Activated CD8-positive, alpha-beta T cell treated with anti-CD3 and anti-CD28 coated beads for 36 hours (primary cell): ENCODE measurements at regions of chr12 and their contacts with region 1.

Region 1: DNA sequence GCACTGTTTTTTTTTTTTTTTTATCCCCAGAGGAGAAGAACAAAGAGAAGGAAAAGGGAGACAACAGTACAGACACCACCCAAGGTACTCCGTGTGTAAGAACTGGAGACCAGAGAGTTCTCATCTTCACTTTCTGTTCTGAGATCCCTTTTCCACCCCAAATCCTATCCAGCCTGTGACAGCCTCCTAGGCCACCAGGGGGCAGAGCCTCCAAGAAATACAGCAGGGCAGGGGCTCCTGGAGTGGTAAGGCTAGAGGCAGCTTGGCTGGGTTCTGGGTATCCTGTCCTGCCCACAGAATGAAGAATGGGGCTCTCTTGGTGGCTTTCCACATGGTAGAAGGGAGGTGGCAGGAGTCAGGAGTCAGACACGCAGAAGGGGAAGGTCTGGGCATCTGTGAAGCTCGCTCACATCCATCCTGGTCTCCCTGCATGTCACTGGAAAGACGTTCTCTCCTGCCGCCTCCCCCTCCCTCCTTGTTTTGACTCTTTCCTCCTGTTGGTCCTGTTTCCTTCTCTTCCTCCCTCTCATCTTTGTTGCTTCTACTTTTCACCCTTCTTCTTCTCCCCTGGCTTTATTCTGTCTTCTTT is 12.0 kb downstream of the CLSTN3 start:
- DNase-seq: peak; percentile 71
- ATAC-seq: peak; percentile 90
- H3K4me3 Mint-ChIP-seq: no peak overlapping the region
- H3K27ac Mint-ChIP-seq: no peak overlapping the region
- H3K4me1 Mint-ChIP-seq: no peaks in the 10 kb centered on the region
- H3K27me3 Mint-ChIP-seq: no peaks in the 10 kb centered on the region
- CTCF ChIP-seq: peak; percentile 61

Region 2: GRCh38 chr12:7155481-7156034 is 13.4 kb after region 1 on chr12:
- CTCF ChIA-PET with region 1: interaction called, 26 read pairs
- POLR2A ChIA-PET with region 1: interaction called, 4 read pairs
- intact Hi-C with region 1: no loop called
- DNase-seq: no peak
- ATAC-seq: no peak
- H3K4me3 Mint-ChIP-seq: no peak overlapping the region
- H3K27ac Mint-ChIP-seq: no peak overlapping the region
- H3K4me1 Mint-ChIP-seq: no peaks in the 10 kb centered on the region
- H3K27me3 Mint-ChIP-seq: no peaks in the 10 kb centered on the region
- CTCF ChIP-seq: no peak

Region 3: GRCh38 chr12:7162691-7163114 is 20.6 kb after region 1 on chr12:
- CTCF ChIA-PET with region 1: interaction called, 15 read pairs
- POLR2A ChIA-PET with region 1: interaction called, 3 read pairs
- intact Hi-C with region 1: no loop called
- DNase-seq: peak; percentile 45
- ATAC-seq: peak; percentile 72
- H3K4me3 Mint-ChIP-seq: no peak overlapping the region
- H3K27ac Mint-ChIP-seq: no peak overlapping the region
- H3K4me1 Mint-ChIP-seq: peaks cover 8% of the 10 kb centered on the region
- H3K27me3 Mint-ChIP-seq: peaks cover 14% of the 10 kb centered on the region
- CTCF ChIP-seq: peak; percentile 30

Region 4: GRCh38 chr12:7188562-7189397 is 46.6 kb after region 1 on chr12:
- CTCF ChIA-PET with region 1: interaction called, 8 read pairs
- POLR2A ChIA-PET with region 1: no interaction called
- intact Hi-C with region 1: loop called (anchors 5 kb)
- DNase-seq: peak; percentile 86
- ATAC-seq: peak; percentile 61
- H3K4me3 Mint-ChIP-seq: peak overlapping the region; percentile 88
- H3K27ac Mint-ChIP-seq: peak overlapping the region; percentile 94
- H3K4me1 Mint-ChIP-seq: peaks cover 36% of the 10 kb centered on the region
- H3K27me3 Mint-ChIP-seq: no peaks in the 10 kb centered on the region
- CTCF ChIP-seq: peak; percentile 71